ENCODE measurements at regions of chr7 and their contacts with region 1.

Region 1: GRCh38 chr7:100711369-100711768 is 5.4 kb downstream of the POP7 start:
- DNase-seq: no peak
- ATAC-seq: no peak
- H3K4me3 ChIP-seq: no peak overlapping the region
- H3K27ac ChIP-seq: no peak overlapping the region
- H3K4me1 ChIP-seq: peaks cover 8% of the 10 kb centered on the region
- CTCF ChIP-seq: no peak
- EP300 ChIP-seq: no peak
- POLR2A ChIP-seq: no peak
- RAD21 ChIP-seq: no peak

Region 2: DNA sequence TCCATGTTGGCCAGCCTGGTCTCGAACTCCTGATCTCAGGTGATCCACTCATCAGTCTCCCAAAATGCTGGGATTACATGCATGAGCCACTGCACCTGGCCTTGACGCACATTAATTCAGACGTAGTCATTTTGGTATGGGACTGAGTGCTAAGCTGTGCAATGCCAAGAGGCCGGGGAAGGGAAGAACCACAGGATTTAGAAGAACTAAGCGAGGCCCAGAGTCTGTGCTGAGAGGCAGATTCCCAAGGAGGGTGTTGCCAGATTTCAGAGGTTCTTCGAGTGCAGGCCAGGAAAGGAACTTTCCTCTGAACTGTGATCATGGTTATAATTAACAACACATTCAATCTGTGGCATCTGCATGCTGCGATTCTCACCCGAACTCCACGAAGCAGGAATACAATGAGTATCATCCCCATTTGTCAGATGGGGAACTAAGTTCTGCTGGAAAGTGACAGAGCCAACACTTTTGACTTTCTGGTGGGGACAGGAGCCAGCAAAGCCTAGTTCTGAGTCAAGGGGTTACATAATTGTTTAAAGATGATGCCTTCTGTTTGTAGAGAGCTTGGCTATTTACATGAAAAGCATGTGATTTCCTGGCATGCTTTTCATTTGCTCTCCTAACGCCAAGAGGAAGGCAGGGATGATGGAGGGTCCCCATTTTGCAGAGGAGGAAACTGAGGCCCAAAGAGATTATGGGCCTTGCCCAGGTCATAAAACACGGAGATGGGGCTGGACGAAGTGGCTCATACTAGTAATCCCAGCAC is 15.8 kb after region 1 on chr7:
- CTCF ChIA-PET with region 1: interaction called, 266 read pairs
- POLR2A ChIA-PET with region 1: no interaction called
- DNase-seq: no peak
- ATAC-seq: no peak
- H3K4me3 ChIP-seq: no peak overlapping the region
- H3K27ac ChIP-seq: no peak overlapping the region
- H3K4me1 ChIP-seq: peaks cover 23% of the 10 kb centered on the region
- CTCF ChIP-seq: no peak
- EP300 ChIP-seq: no peak
- POLR2A ChIP-seq: no peak
- RAD21 ChIP-seq: no peak